GM13977 (cell line): ENCODE measurements at regions of chr22 and their contacts with region 1.

Region 1: GRCh38 chr22:33920927-33921524 is 750 bp upstream of the LARGE1 start:
- DNase-seq: peak; percentile 95
- CTCF ChIP-seq: no peak

Region 2: DNA sequence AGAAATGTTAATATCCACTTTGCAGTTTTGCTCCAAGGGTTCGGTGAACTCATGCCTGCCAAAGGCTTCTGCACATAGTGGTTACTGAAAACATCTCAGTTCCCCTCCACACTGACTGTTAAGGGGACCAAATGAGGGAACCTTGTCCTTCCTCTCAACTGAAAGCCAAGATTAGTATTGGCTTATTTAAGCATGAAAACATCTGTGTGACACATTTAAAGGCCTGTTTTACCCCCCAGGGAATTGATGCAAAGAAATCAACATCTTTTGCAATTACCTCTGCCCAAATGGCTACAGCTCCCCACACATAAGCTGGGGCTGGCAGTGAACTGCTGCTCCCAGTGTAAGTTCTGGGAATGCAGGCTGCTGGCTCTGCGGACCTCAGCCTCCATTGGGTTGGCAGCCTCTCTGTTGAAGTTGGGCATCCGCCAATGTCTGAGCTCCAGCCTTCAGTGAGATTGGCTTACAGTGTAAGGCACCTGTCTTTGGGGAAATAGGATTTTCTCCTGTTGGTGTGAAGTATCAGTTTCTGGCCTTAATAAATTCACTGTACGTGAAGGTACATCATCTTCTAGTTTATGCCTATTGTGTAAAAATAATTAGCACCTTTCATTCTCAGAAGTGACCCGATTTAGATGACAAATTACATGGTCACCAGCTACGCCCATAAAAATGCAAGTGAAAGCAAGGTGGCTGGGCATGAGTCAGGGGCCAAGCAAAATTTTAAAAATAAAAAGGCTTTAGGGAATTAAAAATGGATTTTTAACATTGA is 649.5 kb before region 1 on chr22:
- in situ Hi-C with region 1: loop called (anchors 25 kb)
- DNase-seq: peak; percentile 64
- CTCF ChIP-seq: no peak

Region 3: GRCh38 chr22:33519071-33519973 is 401.7 kb before region 1 on chr22:
- in situ Hi-C with region 1: loop called (anchors 25 kb)
- DNase-seq: peak; percentile 65
- CTCF ChIP-seq: peak; percentile 61

Region 4: GRCh38 chr22:33639588-33640254 is 281.3 kb before region 1 on chr22:
- in situ Hi-C with region 1: no loop called
- DNase-seq: no peak
- CTCF ChIP-seq: no peak

Region 5: DNA sequence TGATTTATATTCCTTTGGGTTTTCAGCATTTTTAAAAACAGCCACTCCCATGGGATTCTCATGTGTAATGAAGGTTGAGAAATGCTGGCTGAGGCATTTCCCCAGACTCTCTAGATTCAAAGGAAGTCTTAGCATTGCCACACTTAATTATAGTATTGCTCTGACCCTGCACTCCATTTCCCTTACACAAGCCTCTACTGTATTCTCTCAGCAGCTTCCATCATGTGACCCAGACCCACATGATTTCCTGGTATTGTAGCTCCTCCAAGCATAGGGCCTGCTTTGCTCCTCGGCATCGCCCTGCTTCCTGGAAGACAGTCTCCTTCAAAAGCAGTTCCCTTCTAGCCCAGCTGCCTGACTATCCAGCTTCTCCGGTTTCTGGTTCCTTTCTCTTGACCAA is 262.3 kb before region 1 on chr22:
- in situ Hi-C with region 1: no loop called
- DNase-seq: no peak
- CTCF ChIP-seq: no peak